Activated CD4-positive, alpha-beta T cell treated with anti-CD3 and anti-CD28 coated beads for 36 hours (primary cell): ENCODE measurements at regions of chr20 and their contacts with region 1.

Region 1: DNA sequence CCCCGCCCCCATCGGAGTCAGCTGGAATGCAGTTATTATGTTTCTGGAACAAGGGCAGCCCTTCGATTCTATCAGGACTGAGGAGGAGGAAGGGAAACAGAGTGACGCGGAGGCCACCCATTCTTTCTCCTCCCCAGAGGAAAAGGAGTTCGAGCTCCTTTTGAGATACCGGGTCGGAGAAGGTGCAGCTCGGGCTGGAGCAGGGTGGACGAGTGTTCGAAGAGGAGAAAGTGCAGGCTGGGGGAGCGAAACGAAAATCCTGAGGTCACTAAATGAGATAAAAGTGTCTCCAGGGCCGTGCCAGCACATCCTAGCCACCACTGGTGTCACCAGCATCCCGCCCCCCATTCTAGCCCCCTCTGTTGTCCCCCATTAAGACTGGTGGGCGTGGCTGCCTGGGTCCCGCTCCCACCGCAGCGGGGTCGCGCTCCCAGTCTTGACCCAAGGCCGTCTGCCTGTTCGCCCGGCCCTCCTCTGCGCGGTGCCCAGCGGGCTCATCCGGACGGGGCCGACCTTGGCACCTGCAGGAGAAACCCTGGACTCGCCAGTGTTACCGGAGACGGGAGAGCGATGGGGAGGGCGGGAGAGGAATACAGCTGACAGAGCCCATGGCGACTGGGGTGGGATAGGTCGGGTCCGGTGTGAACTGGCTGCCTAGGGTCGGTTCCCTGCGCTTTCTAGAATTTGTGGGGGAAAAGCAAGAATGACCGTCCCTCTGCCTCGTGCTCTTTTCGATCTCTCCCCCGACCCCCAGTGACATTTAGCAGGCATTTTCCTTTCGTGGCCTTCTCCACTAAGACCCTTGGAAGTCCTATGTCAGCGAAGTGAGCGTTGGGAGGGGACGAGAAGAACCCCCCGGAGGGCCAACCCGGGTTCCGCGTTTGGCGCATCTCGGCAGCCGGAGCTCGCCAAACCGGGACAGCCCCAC is 16.2 kb downstream of the FOXA2 start:
- DNase-seq: no peak
- ATAC-seq: no peak
- H3K4me3 Mint-ChIP-seq: no peak overlapping the region
- H3K27ac Mint-ChIP-seq: no peak overlapping the region
- H3K4me1 Mint-ChIP-seq: no peaks in the 10 kb centered on the region
- H3K27me3 Mint-ChIP-seq: peaks cover 65% of the 10 kb centered on the region

Region 2: GRCh38 chr20:21514553-21515251 is 1053.5 kb before region 1 on chr20:
- CTCF ChIA-PET with region 1: no interaction called
- POLR2A ChIA-PET with region 1: no interaction called
- intact Hi-C with region 1: loop called (anchors 5 to 10 kb)
- DNase-seq: peak; percentile 22
- ATAC-seq: no peak
- H3K4me3 Mint-ChIP-seq: peak overlapping the region; percentile 28
- H3K27ac Mint-ChIP-seq: no peak overlapping the region
- H3K4me1 Mint-ChIP-seq: peaks cover 52% of the 10 kb centered on the region
- H3K27me3 Mint-ChIP-seq: peaks cover 73% of the 10 kb centered on the region

Region 3: DNA sequence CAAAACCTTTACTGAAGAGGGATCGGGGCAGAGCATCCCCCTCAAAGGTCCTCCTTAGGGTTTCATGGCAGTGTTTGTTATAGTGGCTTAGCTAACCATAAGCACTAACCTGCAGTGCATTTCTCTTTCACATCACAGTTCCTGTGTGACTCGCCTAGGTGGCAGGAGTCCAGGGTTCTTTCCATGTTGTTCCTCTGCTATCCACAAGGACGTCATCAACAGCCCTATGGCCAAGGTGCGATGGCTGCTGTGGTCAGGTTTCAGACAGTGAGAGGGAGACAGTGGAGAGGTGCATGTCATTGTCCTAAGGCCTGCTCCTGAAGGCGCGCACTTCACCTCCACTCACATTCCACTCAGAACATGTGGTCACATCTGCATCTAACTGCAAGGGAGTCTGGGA is 55.0 kb after region 1 on chr20:
- CTCF ChIA-PET with region 1: no interaction called
- POLR2A ChIA-PET with region 1: no interaction called
- intact Hi-C with region 1: no loop called
- DNase-seq: no peak
- ATAC-seq: no peak
- H3K4me3 Mint-ChIP-seq: no peak overlapping the region
- H3K27ac Mint-ChIP-seq: no peak overlapping the region
- H3K4me1 Mint-ChIP-seq: no peaks in the 10 kb centered on the region
- H3K27me3 Mint-ChIP-seq: peaks cover 3% of the 10 kb centered on the region